IMR-90 (cell line): ENCODE measurements at regions of chr6 and their contacts with region 1.

Region 1: DNA sequence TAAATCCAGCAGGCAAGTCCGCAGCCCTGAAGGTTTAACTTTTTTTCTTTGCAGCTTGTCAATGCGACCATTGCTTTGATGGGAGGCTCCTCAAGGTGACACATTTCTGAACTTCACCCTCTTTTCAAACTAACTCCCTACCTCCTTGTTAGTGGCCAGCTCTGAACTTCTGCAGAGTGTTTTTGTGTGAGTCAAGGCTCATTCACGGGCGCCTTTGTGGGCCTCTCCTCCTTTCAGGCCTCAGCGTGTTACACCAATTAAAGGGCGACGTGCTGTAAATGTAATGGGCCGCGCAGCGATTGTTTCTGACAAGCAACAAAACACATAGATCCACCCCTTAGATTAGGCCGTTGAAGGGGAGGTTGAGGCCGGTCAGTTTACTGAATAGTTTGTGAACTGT is 45.5 kb upstream of the NR2E1 start:
- DNase-seq: no peak
- ATAC-seq: no peak
- H3K4me3 ChIP-seq: no peak overlapping the region
- H3K27ac ChIP-seq: no peak overlapping the region
- H3K4me1 ChIP-seq: no peaks in the 10 kb centered on the region; the same call in 1 of the 2 replicates
- H3K27me3 ChIP-seq: peaks cover 92% of the 10 kb centered on the region
- CTCF ChIP-seq: no peak
- POLR2A ChIP-seq: no peak
- RAD21 ChIP-seq: no peak

Region 2: GRCh38 chr6:108108374-108108773 is 11.9 kb before region 1 on chr6:
- CTCF ChIA-PET with region 1: interaction called, 10 read pairs
- POLR2A ChIA-PET with region 1: no interaction called
- dilution Hi-C with region 1: no loop called
- in situ Hi-C with region 1: no loop called
- intact Hi-C with region 1: no loop called
- DNase-seq: no peak
- ATAC-seq: no peak
- H3K4me3 ChIP-seq: no peak overlapping the region
- H3K27ac ChIP-seq: no peak overlapping the region
- H3K4me1 ChIP-seq: no peaks in the 10 kb centered on the region
- H3K27me3 ChIP-seq: peaks cover 31% of the 10 kb centered on the region
- CTCF ChIP-seq: no peak
- POLR2A ChIP-seq: no peak
- RAD21 ChIP-seq: no peak